Psoas muscle (tissue), 8 donors: ENCODE measurements at regions of chr5 and their contacts with region 1.

Region 1: GRCh38 chr5:173165177-173166016 is 21.1 kb downstream of the BNIP1 start:
- DNase-seq: no peak
- ATAC-seq: peak; percentile 56 to 76 (median 70)
- H3K4me3 ChIP-seq: no peak overlapping the region
- H3K27ac ChIP-seq: peak overlapping the region; percentile 36
- H3K4me1 ChIP-seq: no peaks in the 10 kb centered on the region
- H3K27me3 ChIP-seq: no peaks in the 10 kb centered on the region
- CTCF ChIP-seq: no peak

Region 2: DNA sequence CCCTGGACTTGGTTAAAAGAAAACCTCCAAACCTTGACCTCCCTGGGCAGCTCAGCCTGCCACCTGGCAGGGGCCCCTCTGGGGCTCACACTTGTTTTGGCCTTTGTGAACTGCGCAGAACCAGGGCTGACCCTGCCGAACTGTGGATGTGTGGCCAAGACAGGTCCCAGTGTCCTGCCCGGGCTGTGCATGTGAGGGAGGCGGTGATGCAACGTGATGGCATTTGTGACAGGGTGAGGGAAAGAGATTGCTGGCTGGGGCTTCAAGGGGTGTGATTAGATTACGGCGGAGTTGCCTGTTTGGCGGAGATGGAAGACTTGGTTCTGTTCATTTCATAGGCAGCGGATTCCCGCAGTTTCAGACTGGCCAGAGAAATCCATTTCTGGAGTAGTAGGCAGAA is 100.0 kb after region 1 on chr5:
- intact Hi-C with region 1: no loop called
- DNase-seq: peak in 1 of 2 donors; percentile 30
- ATAC-seq: peak in 2 of 4 donors; percentile 56 to 86
- H3K4me3 ChIP-seq: no peak overlapping the region
- H3K27ac ChIP-seq: no peak overlapping the region
- H3K4me1 ChIP-seq: no peaks in the 10 kb centered on the region
- H3K27me3 ChIP-seq: peaks cover 0 to 14% (median 0%) of the 10 kb centered on the region in 3 donors
- CTCF ChIP-seq: no peak

Region 3: DNA sequence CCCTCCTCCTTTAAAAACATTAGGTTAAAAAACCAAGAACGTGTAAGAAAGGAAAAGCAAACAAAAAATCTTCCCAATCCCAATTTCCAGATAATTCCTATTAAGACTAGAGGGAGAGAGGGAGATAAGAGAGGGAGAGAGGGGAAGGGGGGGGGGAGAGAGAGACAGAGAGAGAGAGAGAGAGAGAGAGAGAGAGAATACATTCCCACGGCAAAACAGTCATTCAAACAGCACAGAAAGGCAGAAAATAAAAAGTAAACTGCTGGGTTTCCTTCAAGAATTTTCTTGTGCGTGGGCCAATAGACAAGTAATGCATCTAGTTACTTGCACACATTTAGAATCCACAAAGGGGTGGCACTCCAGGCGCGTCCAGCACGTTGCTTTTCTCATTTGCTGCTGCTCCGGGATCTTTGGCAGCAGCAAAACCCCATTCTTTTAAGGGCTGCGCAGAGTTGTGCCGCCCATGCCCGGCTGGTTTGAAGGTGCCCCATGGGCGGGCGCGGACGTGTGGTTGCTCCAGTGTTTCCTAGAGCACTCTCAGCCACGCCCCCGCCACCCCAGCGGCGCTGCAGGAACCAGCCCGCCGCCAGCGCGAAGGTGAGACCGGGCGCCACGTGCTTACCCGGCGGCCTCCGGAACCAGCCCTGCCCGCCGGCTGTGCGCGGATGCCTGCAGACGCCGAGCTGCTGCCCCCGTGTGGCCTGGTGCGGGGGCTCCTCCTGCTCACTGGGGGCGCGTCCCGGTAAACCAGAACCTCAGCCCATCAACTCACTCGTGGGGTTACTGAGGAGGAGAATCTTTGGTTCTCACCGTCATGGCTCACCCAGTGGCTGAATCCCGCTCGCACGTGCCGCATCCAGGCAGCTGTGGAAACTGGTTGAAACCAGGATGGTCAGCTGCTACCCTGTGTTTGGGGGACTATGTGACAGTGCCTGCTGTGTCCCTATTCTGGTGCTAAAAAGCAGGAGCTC is 118.2 kb after region 1 on chr5:
- intact Hi-C with region 1: loop called in 1 of 2 experiments (anchors 5 kb)
- DNase-seq: peak; percentile 78 to 80
- ATAC-seq: peak; percentile 91 to 99 (median 96)
- H3K4me3 ChIP-seq: peak overlapping the region; percentile 43
- H3K27ac ChIP-seq: no peak overlapping the region
- H3K4me1 ChIP-seq: no peaks in the 10 kb centered on the region
- H3K27me3 ChIP-seq: peaks cover 3 to 64% (median 4%) of the 10 kb centered on the region in 3 donors
- CTCF ChIP-seq: peak; percentile 66